ENCODE measurements at regions of chr17 and their contacts with region 1.

Region 1: DNA sequence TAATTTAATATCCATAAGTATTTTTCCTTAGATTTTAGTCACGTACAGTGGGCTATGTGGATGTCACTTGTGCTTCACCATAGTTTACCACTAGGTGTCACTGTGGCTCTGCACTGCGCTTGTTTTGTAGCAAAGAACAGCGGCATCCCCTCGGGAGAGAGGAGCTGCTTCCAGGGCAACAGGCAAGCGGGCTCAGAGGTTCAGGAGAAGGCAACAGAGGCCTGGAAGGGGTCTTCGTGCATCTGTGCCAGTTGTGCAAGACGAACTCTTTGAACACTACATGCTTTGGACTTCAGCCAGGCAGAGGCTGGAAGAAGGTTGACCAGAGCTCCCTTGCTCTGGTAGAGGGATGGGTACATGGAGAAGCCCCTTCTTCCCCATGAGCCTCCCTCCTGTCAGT is 20.6 kb downstream of the CYB561 start:
- H3K4me3 Mint-ChIP-seq: no peak overlapping the region
- H3K27ac Mint-ChIP-seq: no peak overlapping the region
- H3K4me1 Mint-ChIP-seq: peaks cover 21% of the 10 kb centered on the region
- H3K27me3 Mint-ChIP-seq: peaks cover 6% of the 10 kb centered on the region

Region 2: GRCh38 chr17:63478791-63479494 is 53.5 kb after region 1 on chr17:
- intact Hi-C with region 1: loop called (anchors 2 kb)
- H3K4me3 Mint-ChIP-seq: peak overlapping the region; percentile 97
- H3K27ac Mint-ChIP-seq: peak overlapping the region; percentile 78
- H3K4me1 Mint-ChIP-seq: peaks cover 80% of the 10 kb centered on the region
- H3K27me3 Mint-ChIP-seq: peaks cover 18% of the 10 kb centered on the region

Region 3: GRCh38 chr17:63611354-63611753 is 185.9 kb after region 1 on chr17:
- intact Hi-C with region 1: loop called (anchors 1 kb)
- H3K4me3 Mint-ChIP-seq: no peak overlapping the region
- H3K27ac Mint-ChIP-seq: no peak overlapping the region
- H3K4me1 Mint-ChIP-seq: no peaks in the 10 kb centered on the region
- H3K27me3 Mint-ChIP-seq: no peaks in the 10 kb centered on the region

Region 4: DNA sequence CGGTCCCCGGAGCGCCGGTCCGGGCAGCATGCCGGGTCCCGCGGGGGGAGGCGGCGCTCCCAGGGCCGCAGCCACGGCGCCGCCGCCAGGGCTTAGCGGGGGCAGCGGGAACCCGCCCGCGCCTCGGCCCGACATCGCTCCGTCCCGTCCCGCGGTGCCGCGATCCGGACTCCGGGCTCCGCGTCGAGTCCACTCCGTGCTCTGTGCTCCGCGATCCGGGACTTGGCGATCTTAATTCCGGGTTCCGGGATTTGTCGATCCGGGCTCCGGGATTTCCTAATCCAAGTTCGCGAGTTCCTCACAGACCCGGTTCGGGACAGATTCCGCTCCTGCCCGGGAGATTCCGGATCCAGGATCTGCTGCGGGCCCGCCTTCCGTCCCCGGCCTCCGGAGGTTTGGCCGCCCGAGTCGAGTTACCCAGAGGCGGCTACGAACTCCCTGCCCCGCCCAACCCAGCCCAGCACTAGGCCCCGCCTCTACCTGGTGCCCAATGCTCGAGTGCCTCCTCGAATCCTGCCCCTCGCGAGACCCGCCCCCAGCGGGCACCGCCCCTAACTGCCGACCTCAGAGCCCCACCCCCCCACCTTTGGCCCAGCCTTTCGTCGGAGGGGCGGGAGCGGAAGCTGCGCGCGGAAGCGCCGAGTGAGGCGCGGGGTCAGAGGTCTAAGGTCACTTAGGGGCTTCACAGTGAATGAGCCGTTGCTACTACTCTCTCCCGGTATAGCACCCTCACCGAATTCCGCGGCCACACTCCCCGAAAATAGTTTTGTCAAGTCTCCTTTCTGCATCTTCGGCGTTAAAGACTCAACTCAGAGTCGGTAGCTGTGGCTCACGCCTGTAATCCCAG is 417.3 kb after region 1 on chr17 and contains the start of gene SMARCD2:
- intact Hi-C with region 1: no loop called
- H3K4me3 Mint-ChIP-seq: peak within 1 kb of the TSS; percentile 87
- H3K27ac Mint-ChIP-seq: peak within 1 kb of the TSS; percentile 93
- H3K4me1 Mint-ChIP-seq: peaks cover 49% of the 10 kb centered on the region
- H3K27me3 Mint-ChIP-seq: no peaks in the 10 kb centered on the region